CD4-positive, alpha-beta T cell (primary cell): ENCODE measurements at regions of chr4 and their contacts with region 1.

Region 1: GRCh38 chr4:6546681-6547447 is 28.1 kb upstream of the MAN2B2 start:
- DNase-seq: peak in 13 of 14 experiments; percentile 12 to 83 (median 34)
- ATAC-seq: peak; percentile 68
- H3K4me3 ChIP-seq: no peak overlapping the region
- H3K4me3 Mint-ChIP-seq: no peak overlapping the region
- H3K27ac ChIP-seq: no peak overlapping the region
- H3K27ac Mint-ChIP-seq: no peak overlapping the region
- H3K4me1 ChIP-seq: no peaks in the 10 kb centered on the region
- H3K4me1 Mint-ChIP-seq: no peaks in the 10 kb centered on the region
- H3K27me3 ChIP-seq: peaks cover 23 to 29% of the 10 kb centered on the region in 2 experiments
- H3K27me3 Mint-ChIP-seq: peaks cover 62% of the 10 kb centered on the region
- CTCF ChIP-seq: peak; percentile 75

Region 2: GRCh38 chr4:6250235-6250983 is 296.5 kb before region 1 on chr4:
- CTCF ChIA-PET with region 1: no interaction called
- POLR2A ChIA-PET with region 1: no interaction called
- intact Hi-C with region 1: loop called (anchors 2 to 5 kb)
- DNase-seq: peak in 5 of 14 experiments; percentile 14 to 83 (median 73)
- ATAC-seq: peak; percentile 49
- H3K4me3 ChIP-seq: no peak overlapping the region
- H3K4me3 Mint-ChIP-seq: no peak overlapping the region
- H3K27ac ChIP-seq: no peak overlapping the region
- H3K27ac Mint-ChIP-seq: no peak overlapping the region
- H3K4me1 ChIP-seq: peaks cover 4% of the 10 kb centered on the region
- H3K4me1 Mint-ChIP-seq: no peaks in the 10 kb centered on the region
- H3K27me3 ChIP-seq: peaks cover 25 to 37% of the 10 kb centered on the region in 2 experiments
- H3K27me3 Mint-ChIP-seq: peaks cover 52% of the 10 kb centered on the region
- CTCF ChIP-seq: peak; percentile 90

Region 3: DNA sequence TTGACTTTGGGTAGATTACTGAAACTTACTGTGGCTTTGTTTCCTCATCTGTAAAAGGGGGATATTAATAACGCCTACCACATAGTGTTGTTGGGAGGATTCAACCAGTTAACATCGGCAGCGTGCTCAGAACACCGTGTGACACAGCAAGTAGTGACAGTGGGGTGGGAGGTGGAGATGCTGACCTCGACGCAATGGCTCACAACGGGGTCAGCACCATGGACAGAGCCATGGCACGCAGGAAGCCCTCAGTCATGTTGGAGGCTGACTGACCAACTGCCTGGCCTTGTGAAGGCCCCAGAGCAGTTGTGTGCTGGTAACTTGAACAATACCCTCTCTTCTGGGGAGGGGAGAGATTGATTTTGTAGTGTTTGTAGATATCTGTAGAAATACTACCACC is 184.0 kb before region 1 on chr4:
- CTCF ChIA-PET with region 1: no interaction called
- POLR2A ChIA-PET with region 1: no interaction called
- intact Hi-C with region 1: loop called in 1 of 2 experiments (anchors 10 kb)
- DNase-seq: peak in 7 of 14 experiments; percentile 2 to 46 (median 15)
- ATAC-seq: no peak
- H3K4me3 ChIP-seq: no peak overlapping the region
- H3K4me3 Mint-ChIP-seq: no peak overlapping the region
- H3K27ac ChIP-seq: no peak overlapping the region
- H3K27ac Mint-ChIP-seq: no peak overlapping the region
- H3K4me1 ChIP-seq: no peaks in the 10 kb centered on the region
- H3K4me1 Mint-ChIP-seq: no peaks in the 10 kb centered on the region
- H3K27me3 ChIP-seq: peaks cover 0 to 3% of the 10 kb centered on the region in 2 experiments
- H3K27me3 Mint-ChIP-seq: peaks cover 2% of the 10 kb centered on the region
- CTCF ChIP-seq: no peak

Region 4: GRCh38 chr4:6595897-6596537 is 49.2 kb after region 1 on chr4:
- CTCF ChIA-PET with region 1: no interaction called
- POLR2A ChIA-PET with region 1: no interaction called
- intact Hi-C with region 1: no loop called
- DNase-seq: peak in 2 of 14 experiments; percentile 16 to 35
- ATAC-seq: no peak
- H3K4me3 ChIP-seq: no peak overlapping the region
- H3K4me3 Mint-ChIP-seq: no peak overlapping the region
- H3K27ac ChIP-seq: no peak overlapping the region
- H3K27ac Mint-ChIP-seq: no peak overlapping the region
- H3K4me1 ChIP-seq: no peaks in the 10 kb centered on the region
- H3K4me1 Mint-ChIP-seq: no peaks in the 10 kb centered on the region
- H3K27me3 ChIP-seq: no peaks in the 10 kb centered on the region
- H3K27me3 Mint-ChIP-seq: no peaks in the 10 kb centered on the region
- CTCF ChIP-seq: no peak